ENCODE measurements at regions of chr7 and their contacts with region 1.

Region 1: GRCh38 chr7:34780546-34780945 is 122.5 kb downstream of the NPSR1 start:
- DNase-seq: no peak
- ATAC-seq: no peak
- H3K4me3 ChIP-seq: no peak overlapping the region
- H3K27ac ChIP-seq: no peak overlapping the region
- H3K4me1 ChIP-seq: no peaks in the 10 kb centered on the region
- H3K27me3 ChIP-seq: no peaks in the 10 kb centered on the region
- CTCF ChIP-seq: no peak

Region 2: GRCh38 chr7:36312344-36313334 is 1532.1 kb after region 1 on chr7:
- intact Hi-C with region 1: loop called in 1 of 10 experiments (anchors 5 kb)
- DNase-seq: no peak
- ATAC-seq: no peak
- H3K4me3 ChIP-seq: no peak overlapping the region
- H3K27ac ChIP-seq: no peak overlapping the region
- H3K4me1 ChIP-seq: peaks cover 0 to 20% (median 6%) of the 10 kb centered on the region in 9 donors
- H3K27me3 ChIP-seq: no peaks in the 10 kb centered on the region
- CTCF ChIP-seq: no peak